CD8-positive, alpha-beta T cell (primary cell): ENCODE measurements at regions of chr5 and their contacts with region 1.

Region 1: GRCh38 chr5:32174011-32174870 is at the start of gene GOLPH3:
- DNase-seq: peak; percentile 79 to 94 (median 92)
- ATAC-seq: peak; percentile 86
- H3K4me3 ChIP-seq: peak within 1 kb of the TSS; percentile 91 to 94
- H3K4me3 Mint-ChIP-seq: peak within 1 kb of the TSS; percentile 97
- H3K27ac ChIP-seq: peak within 1 kb of the TSS; percentile 95 to 97
- H3K27ac Mint-ChIP-seq: peak within 1 kb of the TSS; percentile 98
- H3K4me1 ChIP-seq: peaks cover 20% of the 10 kb centered on the region
- H3K4me1 Mint-ChIP-seq: peaks cover 37% of the 10 kb centered on the region
- H3K27me3 ChIP-seq: no peaks in the 10 kb centered on the region
- H3K27me3 Mint-ChIP-seq: peaks cover 4% of the 10 kb centered on the region
- CTCF ChIP-seq: no peak
- total RNA-seq, gene GOLPH3: 48.3 to 51.2 TPM

Region 2: GRCh38 chr5:31531888-31532710 is 642.1 kb before region 1 on chr5 and contains the starts of genes C5orf22 and DROSHA:
- CTCF ChIA-PET with region 1: no interaction called
- POLR2A ChIA-PET with region 1: no interaction called
- intact Hi-C with region 1: loop called (anchors 1 to 5 kb)
- DNase-seq: peak; percentile 72 to 96 (median 91)
- ATAC-seq: peak; percentile 97
- H3K4me3 ChIP-seq: peak within 1 kb of the TSS; percentile 87 to 91
- H3K4me3 Mint-ChIP-seq: peak within 1 kb of the TSS; percentile 99
- H3K27ac ChIP-seq: peak within 1 kb of the TSS; percentile 63 to 75
- H3K27ac Mint-ChIP-seq: peak within 1 kb of the TSS; percentile 92
- H3K4me1 ChIP-seq: peaks cover 34% of the 10 kb centered on the region
- H3K4me1 Mint-ChIP-seq: peaks cover 59% of the 10 kb centered on the region
- H3K27me3 ChIP-seq: no peaks in the 10 kb centered on the region
- H3K27me3 Mint-ChIP-seq: no peaks in the 10 kb centered on the region
- CTCF ChIP-seq: no peak
- total RNA-seq, gene C5orf22: 11.4 to 14.2 TPM
- total RNA-seq, gene DROSHA: 18.6 to 21.6 TPM

Region 3: GRCh38 chr5:31854181-31855133 is 319.8 kb before region 1 on chr5:
- CTCF ChIA-PET with region 1: no interaction called
- POLR2A ChIA-PET with region 1: no interaction called
- intact Hi-C with region 1: loop called in 1 of 2 experiments (anchors 2 kb)
- DNase-seq: peak in 3 of 9 experiments; percentile 7 to 50 (median 31)
- ATAC-seq: peak; percentile 40
- H3K4me3 ChIP-seq: peak overlapping the region; percentile 41 to 63
- H3K4me3 Mint-ChIP-seq: peak overlapping the region; percentile 80
- H3K27ac ChIP-seq: no peak overlapping the region
- H3K27ac Mint-ChIP-seq: peak overlapping the region; percentile 57
- H3K4me1 ChIP-seq: peaks cover 15% of the 10 kb centered on the region
- H3K4me1 Mint-ChIP-seq: peaks cover 27% of the 10 kb centered on the region
- H3K27me3 ChIP-seq: no peaks in the 10 kb centered on the region
- H3K27me3 Mint-ChIP-seq: peaks cover 21% of the 10 kb centered on the region
- CTCF ChIP-seq: no peak

Region 4: GRCh38 chr5:32138839-32139493 is 35.3 kb before region 1 on chr5:
- CTCF ChIA-PET with region 1: no interaction called
- POLR2A ChIA-PET with region 1: interaction called, 3 read pairs
- intact Hi-C with region 1: loop called in 1 of 2 experiments (anchors 5 kb)
- DNase-seq: peak in 3 of 9 experiments; percentile 16 to 33 (median 28)
- ATAC-seq: peak; percentile 49
- H3K4me3 ChIP-seq: no peak overlapping the region
- H3K4me3 Mint-ChIP-seq: no peak overlapping the region
- H3K27ac ChIP-seq: no peak overlapping the region
- H3K27ac Mint-ChIP-seq: no peak overlapping the region
- H3K4me1 ChIP-seq: no peaks in the 10 kb centered on the region
- H3K4me1 Mint-ChIP-seq: peaks cover 25% of the 10 kb centered on the region
- H3K27me3 ChIP-seq: no peaks in the 10 kb centered on the region
- H3K27me3 Mint-ChIP-seq: no peaks in the 10 kb centered on the region
- CTCF ChIP-seq: no peak

Region 5: DNA sequence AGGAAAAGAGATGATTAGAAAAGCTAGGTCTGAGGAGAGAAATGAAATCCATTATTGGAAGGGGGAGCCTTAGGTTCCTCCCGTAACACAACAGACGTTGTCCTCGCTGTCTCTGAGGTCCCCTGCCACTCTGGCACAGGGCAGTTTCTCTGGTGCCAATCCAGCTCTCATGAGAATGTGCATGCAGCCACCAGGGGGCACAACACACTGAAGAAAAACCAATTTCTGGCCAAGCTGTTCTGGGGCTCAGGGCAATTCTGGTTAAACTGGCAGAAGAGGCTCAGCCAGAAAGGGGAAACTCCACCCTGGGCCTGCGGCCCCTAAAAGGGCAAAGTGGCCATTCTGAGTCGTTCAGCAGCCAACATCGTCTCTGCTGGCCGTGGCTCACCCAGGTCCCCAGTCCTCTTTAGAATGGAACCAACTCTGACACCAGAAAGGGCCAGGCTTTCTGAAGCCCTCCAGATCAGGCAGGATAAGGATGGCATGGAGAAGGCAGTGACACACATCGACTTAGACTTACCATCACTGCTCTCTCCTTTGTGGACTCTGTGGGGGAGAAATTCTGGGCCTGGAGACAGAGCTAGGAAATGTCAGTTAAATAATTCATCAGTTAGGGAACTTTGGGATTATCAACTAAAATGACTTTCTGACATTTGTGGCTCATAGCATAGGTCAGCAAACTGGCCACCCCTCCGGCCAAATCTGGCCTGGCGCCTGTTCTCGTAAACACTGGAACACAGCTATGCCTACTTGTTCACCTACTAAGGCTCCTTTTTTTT is 58.4 kb after region 1 on chr5:
- CTCF ChIA-PET with region 1: interaction called, 3 read pairs
- POLR2A ChIA-PET with region 1: no interaction called
- intact Hi-C with region 1: loop called in 1 of 2 experiments (anchors 10 kb)
- DNase-seq: peak; percentile 54 to 86 (median 76)
- ATAC-seq: peak; percentile 88
- H3K4me3 ChIP-seq: no peak overlapping the region
- H3K4me3 Mint-ChIP-seq: no peak overlapping the region
- H3K27ac ChIP-seq: peak overlapping the region in 1 of 2 experiments; percentile 23
- H3K27ac Mint-ChIP-seq: peak overlapping the region; percentile 79
- H3K4me1 ChIP-seq: no peaks in the 10 kb centered on the region
- H3K4me1 Mint-ChIP-seq: no peaks in the 10 kb centered on the region
- H3K27me3 ChIP-seq: no peaks in the 10 kb centered on the region
- H3K27me3 Mint-ChIP-seq: no peaks in the 10 kb centered on the region
- CTCF ChIP-seq: peak; percentile 61

Region 6: DNA sequence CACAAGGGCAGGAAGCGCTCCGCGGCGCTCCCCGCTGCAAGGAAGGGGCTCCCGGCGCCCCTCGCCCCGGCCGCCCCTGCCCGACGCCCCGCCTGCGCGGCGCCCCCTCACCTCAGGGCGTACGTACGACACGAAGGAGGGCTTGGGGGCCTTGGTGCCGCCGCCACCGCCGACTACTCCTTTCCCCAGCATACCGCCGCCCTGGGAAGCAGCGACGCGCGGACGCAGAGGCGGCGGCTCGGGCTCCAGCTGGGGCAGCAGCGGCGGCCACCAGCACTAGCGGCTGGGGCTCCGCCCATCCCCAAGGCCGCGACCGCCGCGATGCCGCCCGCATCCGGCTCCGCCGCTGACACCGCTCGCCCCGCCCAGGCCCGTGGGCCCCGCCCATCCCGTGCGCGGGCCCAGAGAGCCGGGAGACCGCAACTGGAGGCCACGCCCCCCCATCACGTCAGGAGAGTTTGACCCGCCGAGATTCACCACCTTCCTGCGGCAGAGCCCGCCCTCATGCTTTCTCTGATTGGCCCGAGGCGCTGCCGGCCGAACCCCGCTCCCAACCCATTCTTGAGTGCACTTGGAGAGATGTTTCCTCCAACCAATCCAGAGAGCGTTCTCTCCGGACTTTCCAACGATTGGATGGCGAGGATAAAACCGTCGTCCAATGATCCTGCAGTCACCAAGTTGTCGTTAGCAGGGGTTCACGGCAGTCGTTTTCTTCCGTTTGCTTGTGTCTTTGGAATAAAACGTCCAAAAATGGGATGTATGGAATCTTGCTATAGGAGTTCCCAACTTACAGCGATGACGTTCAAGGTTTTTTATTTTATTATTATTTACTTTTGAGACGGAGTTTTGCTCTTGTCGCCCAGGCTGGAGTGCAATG is 138.6 kb after region 1 on chr5 and contains the start of gene MTMR12:
- CTCF ChIA-PET with region 1: no interaction called
- POLR2A ChIA-PET with region 1: no interaction called
- intact Hi-C with region 1: loop called (anchors 1 to 5 kb)
- DNase-seq: peak; percentile 99 to 100 (median 100)
- ATAC-seq: peak; percentile 89
- H3K4me3 ChIP-seq: peak within 1 kb of the TSS; percentile 69 to 83
- H3K4me3 Mint-ChIP-seq: peak within 1 kb of the TSS; percentile 89
- H3K27ac ChIP-seq: peak within 1 kb of the TSS; percentile 87 to 89
- H3K27ac Mint-ChIP-seq: peak within 1 kb of the TSS; percentile 93
- H3K4me1 ChIP-seq: peaks cover 22% of the 10 kb centered on the region
- H3K4me1 Mint-ChIP-seq: peaks cover 39% of the 10 kb centered on the region
- H3K27me3 ChIP-seq: no peaks in the 10 kb centered on the region
- H3K27me3 Mint-ChIP-seq: no peaks in the 10 kb centered on the region
- CTCF ChIP-seq: no peak
- total RNA-seq, gene MTMR12: 20.0 to 21.2 TPM

Region 7: DNA sequence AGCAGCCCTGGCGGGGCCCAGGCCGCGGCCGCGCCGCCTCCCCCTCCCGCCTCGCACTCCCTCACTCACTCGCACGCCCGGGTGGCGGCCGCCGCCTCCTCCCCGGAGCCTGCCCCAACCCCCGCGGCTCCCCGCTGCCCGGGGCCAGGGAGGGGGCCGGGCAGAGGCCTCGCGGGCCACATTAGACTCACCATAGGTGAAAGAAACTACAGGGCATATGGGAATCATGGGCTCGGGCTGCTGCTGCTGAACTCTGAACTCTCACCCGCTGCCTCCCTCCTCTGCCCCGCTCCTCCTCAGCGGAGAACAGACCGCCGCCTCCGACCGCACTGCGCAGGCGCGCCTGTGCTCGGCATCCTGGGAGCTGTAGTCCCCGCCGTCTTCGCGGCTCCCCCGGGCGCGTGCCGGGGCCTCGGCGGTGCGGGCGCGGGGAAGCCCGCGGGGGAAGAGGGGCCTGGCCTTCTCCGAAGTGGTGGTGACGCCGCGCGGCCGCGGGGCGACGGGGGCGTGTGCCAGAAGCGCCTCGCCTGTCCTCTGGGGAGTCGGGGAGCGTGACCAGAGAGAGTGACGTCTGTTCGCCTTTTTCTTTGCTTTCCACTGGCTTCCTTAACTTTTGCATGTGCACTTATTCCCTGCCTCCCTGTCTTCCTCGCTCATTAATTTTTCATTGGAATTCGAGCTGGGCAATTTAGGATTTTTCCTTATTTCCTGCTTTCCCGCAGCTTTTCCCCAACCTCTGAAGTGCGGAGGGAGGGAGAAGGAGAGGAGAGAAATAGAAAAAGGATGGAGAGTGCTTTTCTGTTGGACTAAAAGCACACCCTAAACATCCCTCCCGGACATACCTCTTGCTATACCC is 270.4 kb after region 1 on chr5 and contains the start of gene ZFR:
- CTCF ChIA-PET with region 1: no interaction called
- POLR2A ChIA-PET with region 1: no interaction called
- intact Hi-C with region 1: loop called (anchors 2 to 5 kb)
- DNase-seq: peak; percentile 86 to 97 (median 92)
- ATAC-seq: peak; percentile 88
- H3K4me3 ChIP-seq: peak within 1 kb of the TSS; percentile 95 to 97
- H3K4me3 Mint-ChIP-seq: peak within 1 kb of the TSS; percentile 90
- H3K27ac ChIP-seq: peak within 1 kb of the TSS; percentile 81 to 90
- H3K27ac Mint-ChIP-seq: peak within 1 kb of the TSS; percentile 95
- H3K4me1 ChIP-seq: peaks cover 30% of the 10 kb centered on the region
- H3K4me1 Mint-ChIP-seq: peaks cover 27% of the 10 kb centered on the region
- H3K27me3 ChIP-seq: no peaks in the 10 kb centered on the region
- H3K27me3 Mint-ChIP-seq: no peaks in the 10 kb centered on the region
- CTCF ChIP-seq: no peak
- total RNA-seq, gene ZFR: 54.0 to 62.9 TPM